ENCODE measurements at regions of chr11 and their contacts with region 1.

Region 1: DNA sequence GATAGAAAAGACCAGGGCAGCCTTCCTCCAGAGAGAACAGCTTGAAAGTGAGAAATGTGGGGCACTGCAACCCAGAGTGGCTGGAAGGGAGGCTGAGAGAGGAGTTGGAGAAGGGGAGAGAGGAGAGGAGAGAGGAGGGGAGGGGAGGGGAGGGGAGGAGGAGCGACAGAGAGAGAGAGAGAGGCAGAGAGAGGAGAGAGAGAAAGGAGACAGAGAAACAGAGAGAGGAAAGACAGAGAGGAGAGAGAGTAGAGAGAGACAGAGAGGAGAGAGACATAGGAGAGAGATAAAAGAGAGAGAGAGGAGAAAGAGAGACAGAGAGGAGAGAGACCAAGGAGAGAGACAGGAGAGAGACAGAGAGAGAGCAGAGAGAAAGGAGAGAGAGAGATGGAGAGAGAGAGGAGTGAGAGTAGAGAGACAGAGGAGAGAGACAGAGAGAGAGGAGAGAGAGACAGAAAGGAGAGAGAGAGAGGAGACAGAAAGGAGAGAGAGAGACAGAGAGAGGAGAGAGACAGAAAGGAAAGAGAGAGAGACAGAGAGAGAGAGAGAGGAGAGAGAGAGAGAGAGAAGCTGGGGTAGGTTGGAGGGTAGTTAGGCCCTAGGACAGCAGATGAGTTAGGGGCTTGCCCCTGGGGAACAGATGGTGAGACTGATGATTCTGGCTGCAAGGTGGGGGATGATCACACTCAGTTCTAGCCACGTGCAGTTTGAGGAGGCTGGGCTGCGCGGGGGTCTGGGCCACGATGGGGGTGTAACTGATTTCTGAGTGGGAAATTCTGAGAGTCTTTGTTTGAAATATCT is 8.5 kb upstream of the SCYL1 start:
- DNase-seq: no peak
- H3K4me3 ChIP-seq: no peak overlapping the region
- H3K27ac ChIP-seq: no peak overlapping the region
- H3K4me1 ChIP-seq: no peaks in the 10 kb centered on the region
- H3K27me3 ChIP-seq: no peaks in the 10 kb centered on the region
- CTCF ChIP-seq: no peak
- EP300 ChIP-seq: no peak
- POLR2A ChIP-seq: no peak

Region 2: GRCh38 chr11:64834723-64835620 is 681.4 kb before region 1 on chr11:
- in situ Hi-C with region 1: no loop called
- intact Hi-C with region 1: no loop called
- DNase-seq: no peak
- H3K4me3 ChIP-seq: no peak overlapping the region
- H3K27ac ChIP-seq: no peak overlapping the region
- H3K4me1 ChIP-seq: no peaks in the 10 kb centered on the region
- H3K27me3 ChIP-seq: no peaks in the 10 kb centered on the region
- CTCF ChIP-seq: no peak
- EP300 ChIP-seq: no peak
- POLR2A ChIP-seq: no peak

Region 3: GRCh38 chr11:65366340-65366773 is 150.0 kb before region 1 on chr11:
- in situ Hi-C with region 1: loop called in 3 of 4 experiments (anchors 5 to 10 kb)
- intact Hi-C with region 1: loop called (anchors 5 kb)
- DNase-seq: peak; percentile 54
- H3K4me3 ChIP-seq: no peak overlapping the region
- H3K27ac ChIP-seq: peak overlapping the region; percentile 11 to 71 (median 50)
- H3K4me1 ChIP-seq: peaks cover 0 to 21% (median 12%) of the 10 kb centered on the region in 4 donors
- H3K27me3 ChIP-seq: no peaks in the 10 kb centered on the region
- CTCF ChIP-seq: peak; percentile 78 to 95 (median 84)
- EP300 ChIP-seq: no peak
- POLR2A ChIP-seq: no peak

Region 4: DNA sequence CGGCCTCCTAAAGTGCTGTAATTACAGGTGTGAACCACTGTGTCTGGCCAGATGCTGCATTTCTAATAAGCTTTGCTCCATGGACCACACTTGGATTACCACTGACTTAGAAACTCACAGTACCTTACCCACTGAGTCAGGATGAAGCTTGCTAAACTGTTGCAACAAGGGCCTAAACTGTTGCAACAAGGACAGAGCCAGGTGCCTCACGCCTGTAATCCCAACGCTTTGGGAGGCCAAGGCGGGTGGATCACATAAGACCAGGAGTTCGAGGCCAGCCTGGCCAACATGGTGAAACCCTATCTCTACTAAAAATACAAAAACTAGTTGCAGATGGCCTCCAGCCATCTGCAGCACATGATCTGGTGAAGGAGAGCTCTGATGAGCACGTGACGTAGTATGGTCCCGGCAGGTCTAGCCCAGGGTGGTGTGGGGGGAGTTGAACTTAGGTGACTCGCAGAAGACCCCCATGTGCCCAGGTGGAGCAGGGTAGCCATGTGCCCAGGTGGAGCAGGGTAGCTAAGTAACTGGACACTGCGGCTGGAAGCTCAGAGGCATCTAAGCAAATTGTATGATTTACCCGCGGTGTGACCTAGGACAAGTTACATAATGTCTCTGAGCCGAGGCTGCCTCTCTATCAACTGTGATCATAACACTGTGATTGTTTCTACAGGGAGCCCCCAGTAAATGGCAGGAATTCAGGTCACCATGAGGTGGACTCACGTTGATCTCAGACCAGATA is 142.3 kb before region 1 on chr11:
- in situ Hi-C with region 1: loop called in 3 of 4 experiments (anchors 5 to 10 kb)
- intact Hi-C with region 1: loop called (anchors 5 kb)
- DNase-seq: no peak
- H3K4me3 ChIP-seq: no peak overlapping the region
- H3K27ac ChIP-seq: no peak overlapping the region
- H3K4me1 ChIP-seq: peaks cover 0 to 4% (median 0%) of the 10 kb centered on the region in 4 donors
- H3K27me3 ChIP-seq: no peaks in the 10 kb centered on the region
- CTCF ChIP-seq: no peak
- EP300 ChIP-seq: no peak
- POLR2A ChIP-seq: no peak

Region 5: GRCh38 chr11:65382033-65382807 is 134.1 kb before region 1 on chr11 and contains the start of gene SLC25A45:
- in situ Hi-C with region 1: no loop called
- intact Hi-C with region 1: loop called (anchors 5 kb)
- DNase-seq: peak; percentile 94
- H3K4me3 ChIP-seq: peak within 1 kb of the TSS; percentile 10 to 35 (median 28)
- H3K27ac ChIP-seq: peak within 1 kb of the TSS; percentile 88 to 98 (median 98)
- H3K4me1 ChIP-seq: peaks cover 44 to 60% (median 50%) of the 10 kb centered on the region in 4 donors
- H3K27me3 ChIP-seq: no peaks in the 10 kb centered on the region
- CTCF ChIP-seq: peak; percentile 81 to 99 (median 89)
- EP300 ChIP-seq: peak; percentile 67
- POLR2A ChIP-seq: peak; percentile 84
- total RNA-seq, gene SLC25A45: 2.2 to 5.6 (median 5.2) TPM

Region 6: DNA sequence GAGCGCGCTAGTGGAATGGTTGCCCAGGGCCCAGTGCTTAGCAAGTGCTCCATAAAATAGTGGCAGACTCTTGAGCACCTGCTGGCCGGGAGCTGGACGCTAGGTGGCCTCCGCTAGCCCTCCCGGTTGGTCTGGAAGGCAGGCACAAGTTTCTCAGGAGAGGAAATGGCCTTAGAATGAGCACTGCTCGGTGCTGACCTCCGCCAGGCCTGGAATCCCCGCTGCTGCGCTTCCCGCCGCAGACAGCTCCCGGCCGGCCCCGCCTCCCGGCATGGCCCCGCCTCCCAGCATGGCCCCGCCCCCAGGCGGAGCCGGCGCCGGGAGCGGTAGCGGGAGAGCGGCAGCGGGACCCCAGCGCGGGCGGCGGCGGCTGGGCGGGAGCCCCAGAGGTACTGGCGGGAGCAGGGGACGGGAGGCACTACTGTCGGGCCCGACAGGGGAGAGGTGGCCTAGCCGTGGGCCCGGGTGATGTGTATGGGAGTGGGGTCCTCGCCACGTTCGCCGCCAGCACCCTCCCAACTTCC is 121.5 kb after region 1 on chr11 and contains the start of gene SIPA1:
- in situ Hi-C with region 1: no loop called
- intact Hi-C with region 1: no loop called
- DNase-seq: peak; percentile 80
- H3K4me3 ChIP-seq: peak within 1 kb of the TSS; percentile 48 to 77 (median 50)
- H3K27ac ChIP-seq: peak within 1 kb of the TSS; percentile 84 to 92 (median 88)
- H3K4me1 ChIP-seq: peaks cover 9 to 38% (median 32%) of the 10 kb centered on the region in 4 donors
- H3K27me3 ChIP-seq: no peaks in the 10 kb centered on the region
- CTCF ChIP-seq: peak in 3 of 5 experiments; percentile 10 to 21 (median 20)
- EP300 ChIP-seq: no peak
- POLR2A ChIP-seq: peak; percentile 51
- total RNA-seq, gene SIPA1: 22.4 to 174 (median 30.9) TPM

Measured in transverse colon (tissue), 4 donors.